Esophagus muscularis mucosa (tissue), 4 donors: ENCODE measurements at regions of chrX and their contacts with region 1.

Region 1: GRCh38 chrX:51496501-51497291 is at the start of gene NUDT11:
- DNase-seq: no peak
- H3K4me3 ChIP-seq: peak within 1 kb of the TSS; percentile 60 to 74 (median 64)
- H3K27ac ChIP-seq: peak within 1 kb of the TSS; percentile 23 to 62 (median 61)
- H3K4me1 ChIP-seq: peaks cover 0 to 9% (median 5%) of the 10 kb centered on the region in 4 donors
- H3K27me3 ChIP-seq: no peaks in the 10 kb centered on the region
- CTCF ChIP-seq: no peak
- EP300 ChIP-seq: no peak
- POLR2A ChIP-seq: no peak
- total RNA-seq, gene NUDT11: 1.2 to 3.4 (median 2.7) TPM

Region 2: DNA sequence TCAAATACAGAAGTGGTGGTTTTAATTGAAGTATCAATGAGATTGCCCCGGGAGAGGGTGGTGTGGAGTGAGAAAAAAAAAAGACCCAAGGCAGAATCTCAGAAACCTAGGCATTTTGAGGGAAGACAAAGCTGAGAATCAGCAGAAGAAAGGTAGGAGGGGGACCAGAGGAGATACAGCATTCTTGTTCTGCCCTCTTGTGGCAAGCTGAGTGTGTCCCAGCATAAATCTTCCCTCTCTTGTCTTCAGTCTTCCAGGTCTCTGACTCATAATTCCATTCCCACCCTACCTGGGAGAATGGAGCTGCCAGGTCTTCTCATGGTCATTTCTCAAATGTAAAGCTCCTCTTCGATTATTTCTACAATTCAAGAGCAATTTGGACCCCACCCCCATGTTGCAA is 364.0 kb after region 1 on chrX:
- intact Hi-C with region 1: loop called (anchors 10 kb)
- DNase-seq: no peak
- H3K4me3 ChIP-seq: no peak overlapping the region
- H3K27ac ChIP-seq: no peak overlapping the region
- H3K4me1 ChIP-seq: no peaks in the 10 kb centered on the region
- H3K27me3 ChIP-seq: no peaks in the 10 kb centered on the region
- CTCF ChIP-seq: peak; percentile 30 to 52 (median 44)
- EP300 ChIP-seq: no peak
- POLR2A ChIP-seq: no peak